ENCODE measurements at regions of chr10 and their contacts with region 1.

Region 1: GRCh38 chr10:125629763-125630376 is 53.1 kb downstream of the TEX36 start:
- DNase-seq: no peak

Region 2: GRCh38 chr10:125591865-125592264 is 38.0 kb before region 1 on chr10:
- intact Hi-C with region 1: loop called in 1 of 2 experiments (anchors 2 kb)
- DNase-seq: no peak

Measured in posterior vena cava (tissue), 2 donors.